Sigmoid colon (tissue), 7 donors: ENCODE measurements at regions of chr1 and their contacts with region 1.

Region 1: DNA sequence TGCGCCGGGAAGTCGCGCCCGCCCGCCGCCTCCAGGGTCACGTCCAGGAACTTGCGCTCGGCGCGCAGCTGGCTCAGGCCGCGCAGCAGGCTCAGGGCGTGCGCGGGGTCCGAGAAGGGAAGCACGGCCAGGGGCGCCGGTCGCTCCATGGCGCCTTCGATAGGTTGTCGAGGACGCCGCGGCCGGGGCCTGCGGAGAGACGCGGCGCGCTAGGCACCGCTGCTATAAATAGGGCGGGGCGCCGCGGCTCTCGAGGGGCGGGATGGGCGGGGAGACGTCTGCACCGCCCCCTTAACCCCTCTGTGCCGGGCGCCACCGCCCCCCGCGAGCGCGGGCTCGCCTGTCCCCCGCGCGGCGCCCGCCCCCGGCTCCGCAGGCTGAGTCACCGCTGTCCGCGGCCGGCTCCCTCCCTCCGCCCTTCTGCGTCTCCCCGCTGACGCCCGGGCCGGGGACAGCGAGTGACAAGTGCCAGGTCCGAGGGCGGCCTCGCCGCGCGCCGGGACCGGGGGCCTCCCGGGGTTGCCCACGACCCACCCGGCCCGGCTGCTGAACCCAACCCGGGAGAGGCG is at the start of gene KLHL21:
- DNase-seq: peak; percentile 97
- H3K4me3 ChIP-seq: peak within 1 kb of the TSS; percentile 77 to 96 (median 89)
- H3K27ac ChIP-seq: peak within 1 kb of the TSS; percentile 97 to 99 (median 98)
- H3K4me1 ChIP-seq: peaks cover 0 to 61% (median 53%) of the 10 kb centered on the region in 4 donors
- H3K27me3 ChIP-seq: no peaks in the 10 kb centered on the region
- CTCF ChIP-seq: no peak
- EP300 ChIP-seq: no peak
- POLR2A ChIP-seq: peak in 1 of 2 donors; percentile 18
- total RNA-seq, gene KLHL21: 54.0 to 83.6 (median 73.2) TPM

Region 2: GRCh38 chr1:6554031-6554906 is 48.5 kb before region 1 on chr1 and contains the start of gene NOL9:
- intact Hi-C with region 1: loop called (anchors 5 kb)
- DNase-seq: peak; percentile 96
- H3K4me3 ChIP-seq: peak within 1 kb of the TSS; percentile 68 to 99 (median 78)
- H3K27ac ChIP-seq: peak within 1 kb of the TSS; percentile 74 to 87 (median 80)
- H3K4me1 ChIP-seq: peaks cover 0 to 28% (median 24%) of the 10 kb centered on the region in 4 donors
- H3K27me3 ChIP-seq: no peaks in the 10 kb centered on the region
- CTCF ChIP-seq: peak; percentile 92 to 95 (median 95)
- EP300 ChIP-seq: no peak
- POLR2A ChIP-seq: no peak
- total RNA-seq, gene NOL9: 17.3 to 29.6 (median 20.7) TPM

Region 3: DNA sequence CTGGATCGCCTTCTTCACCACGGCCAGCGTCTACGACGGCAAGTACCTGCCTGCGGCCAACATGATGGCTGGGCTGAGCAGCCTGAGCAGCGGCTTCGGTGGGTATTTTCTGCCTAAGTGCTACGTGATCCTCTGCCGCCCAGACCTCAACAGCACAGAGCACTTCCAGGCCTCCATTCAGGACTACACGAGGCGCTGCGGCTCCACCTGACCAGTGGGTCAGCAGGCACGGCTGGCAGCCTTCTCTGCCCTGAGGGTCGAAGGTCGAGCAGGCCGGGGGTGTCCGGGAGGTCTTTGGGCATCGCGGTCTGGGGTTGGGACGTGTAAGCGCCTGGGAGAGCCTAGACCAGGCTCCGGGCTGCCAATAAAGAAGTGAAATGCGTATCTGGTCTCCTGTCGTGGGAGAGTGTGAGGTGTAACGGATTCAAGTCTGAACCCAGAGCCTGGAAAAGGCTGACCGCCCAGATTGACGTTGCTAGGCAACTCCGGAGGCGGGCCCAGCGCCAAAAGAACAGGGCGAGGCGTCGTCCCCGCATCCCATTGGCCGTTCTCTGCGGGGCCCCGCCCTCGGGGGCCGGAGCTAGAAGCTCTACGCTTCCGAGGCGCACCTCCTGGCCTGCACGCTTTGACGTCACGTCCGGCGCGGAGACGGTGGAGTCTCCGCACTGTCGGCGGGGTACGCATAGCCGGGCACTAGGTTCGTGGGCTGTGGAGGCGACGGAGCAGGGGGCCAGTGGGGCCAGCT is 23.2 kb before region 1 on chr1 and contains the start of gene ZBTB48:
- intact Hi-C with region 1: loop called (anchors 2 kb)
- DNase-seq: peak; percentile 100
- H3K4me3 ChIP-seq: peak within 1 kb of the TSS; percentile 79 to 93 (median 86)
- H3K27ac ChIP-seq: peak within 1 kb of the TSS; percentile 92 to 97 (median 94)
- H3K4me1 ChIP-seq: peaks cover 0 to 34% (median 29%) of the 10 kb centered on the region in 4 donors
- H3K27me3 ChIP-seq: no peaks in the 10 kb centered on the region
- CTCF ChIP-seq: no peak
- EP300 ChIP-seq: no peak
- POLR2A ChIP-seq: peak; percentile 95
- total RNA-seq, gene ZBTB48: 14.4 to 26.8 (median 16.3) TPM

Region 4: DNA sequence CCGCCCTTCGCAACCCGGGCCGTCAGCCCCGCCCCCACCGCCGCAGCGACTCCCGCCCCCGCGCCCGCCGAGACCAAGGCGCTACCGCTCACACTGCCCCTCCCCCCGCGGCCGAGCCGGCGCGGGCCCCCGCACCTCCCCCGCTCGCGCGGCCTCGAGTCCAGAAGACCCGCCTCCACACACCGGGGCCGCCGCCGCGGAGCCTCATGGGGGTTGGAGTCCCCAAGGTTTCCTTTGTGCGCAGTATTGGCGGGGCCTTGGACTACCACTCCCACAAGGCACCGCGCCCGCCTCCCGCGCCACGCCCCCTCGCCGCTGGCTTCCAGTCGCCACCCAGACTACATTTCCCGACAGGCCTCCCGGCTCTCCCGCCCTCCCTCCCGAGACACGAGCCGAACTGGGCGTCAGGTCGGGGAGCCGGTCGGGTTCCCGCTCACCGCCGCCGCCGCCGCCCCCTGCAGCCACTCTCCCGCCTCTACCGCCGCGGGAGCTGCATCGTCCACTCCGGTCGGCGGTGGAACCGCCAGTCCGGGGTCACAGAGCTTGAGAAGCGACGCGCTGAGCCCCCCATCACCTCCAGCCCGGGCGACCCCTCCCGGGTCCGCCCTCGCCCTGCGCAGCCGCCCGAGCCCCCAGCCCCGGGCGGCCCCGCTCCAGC is 10.7 kb after region 1 on chr1 and contains the start of gene PHF13:
- intact Hi-C with region 1: loop called (anchors 1 kb)
- DNase-seq: peak; percentile 100
- H3K4me3 ChIP-seq: peak within 1 kb of the TSS; percentile 96 to 100 (median 100)
- H3K27ac ChIP-seq: peak within 1 kb of the TSS; percentile 99 to 100 (median 99)
- H3K4me1 ChIP-seq: peaks cover 0 to 61% (median 54%) of the 10 kb centered on the region in 4 donors
- H3K27me3 ChIP-seq: no peaks in the 10 kb centered on the region
- CTCF ChIP-seq: no peak
- EP300 ChIP-seq: peak in 1 of 4 donors; percentile 22
- POLR2A ChIP-seq: peak; percentile 54 to 78
- total RNA-seq, gene PHF13: 12.5 to 19.4 (median 15.9) TPM

Region 5: GRCh38 chr1:6624710-6625583 is 22.2 kb after region 1 on chr1 and contains the start of gene THAP3:
- intact Hi-C with region 1: loop called (anchors 1 kb)
- DNase-seq: peak; percentile 95
- H3K4me3 ChIP-seq: peak within 1 kb of the TSS; percentile 63 to 78 (median 74)
- H3K27ac ChIP-seq: peak within 1 kb of the TSS; percentile 88 to 94 (median 92)
- H3K4me1 ChIP-seq: peaks cover 0 to 48% (median 40%) of the 10 kb centered on the region in 4 donors
- H3K27me3 ChIP-seq: no peaks in the 10 kb centered on the region
- CTCF ChIP-seq: no peak
- EP300 ChIP-seq: no peak
- POLR2A ChIP-seq: no peak
- total RNA-seq, gene THAP3: 22.7 to 30.6 (median 26.6) TPM

Region 6: GRCh38 chr1:6634371-6635052 is 31.8 kb after region 1 on chr1:
- intact Hi-C with region 1: loop called (anchors 5 kb)
- DNase-seq: peak; percentile 79
- H3K4me3 ChIP-seq: no peak overlapping the region
- H3K27ac ChIP-seq: no peak overlapping the region
- H3K4me1 ChIP-seq: peaks cover 0 to 9% (median 3%) of the 10 kb centered on the region in 4 donors
- H3K27me3 ChIP-seq: no peaks in the 10 kb centered on the region
- CTCF ChIP-seq: peak in 3 of 4 experiments; percentile 31 to 61 (median 48)
- EP300 ChIP-seq: no peak
- POLR2A ChIP-seq: no peak